Common myeloid progenitor, CD34-positive (primary cell): ENCODE measurements at regions of chr18 and their contacts with region 1.

Region 1: GRCh38 chr18:67104700-67105284 is 411.7 kb downstream of the DSEL start:
- DNase-seq: peak; percentile 47 to 68 (median 62)
- H3K4me3 ChIP-seq: no peak overlapping the region
- H3K27ac ChIP-seq: no peak overlapping the region
- H3K4me1 ChIP-seq: no peaks in the 10 kb centered on the region
- H3K27me3 ChIP-seq: peaks cover 0 to 3% (median 2%) of the 10 kb centered on the region in 5 experiments

Region 2: DNA sequence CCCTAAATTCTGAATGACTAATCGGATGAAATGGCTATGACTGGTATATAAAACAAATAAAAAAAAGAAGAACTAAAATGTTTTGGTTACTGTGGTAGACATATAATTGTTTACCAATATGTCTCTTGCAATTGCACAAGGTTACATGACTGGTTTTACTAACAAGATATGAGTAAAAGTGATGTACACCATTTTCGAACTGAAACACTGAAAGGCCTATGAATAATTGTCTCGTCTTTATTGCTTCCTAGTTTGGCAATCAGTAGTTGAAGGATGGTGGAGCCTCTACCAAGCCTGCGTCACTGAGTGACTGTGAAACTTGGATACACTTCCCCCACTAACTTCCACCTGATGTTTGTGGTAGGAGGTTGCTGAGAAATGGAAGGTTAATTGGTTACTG is 517.4 kb before region 1 on chr18:
- CTCF ChIA-PET with region 1: no interaction called
- POLR2A ChIA-PET with region 1: no interaction called
- DNase-seq: no peak
- H3K4me3 ChIP-seq: no peak overlapping the region
- H3K27ac ChIP-seq: no peak overlapping the region
- H3K4me1 ChIP-seq: no peaks in the 10 kb centered on the region
- H3K27me3 ChIP-seq: no peaks in the 10 kb centered on the region

Region 3: DNA sequence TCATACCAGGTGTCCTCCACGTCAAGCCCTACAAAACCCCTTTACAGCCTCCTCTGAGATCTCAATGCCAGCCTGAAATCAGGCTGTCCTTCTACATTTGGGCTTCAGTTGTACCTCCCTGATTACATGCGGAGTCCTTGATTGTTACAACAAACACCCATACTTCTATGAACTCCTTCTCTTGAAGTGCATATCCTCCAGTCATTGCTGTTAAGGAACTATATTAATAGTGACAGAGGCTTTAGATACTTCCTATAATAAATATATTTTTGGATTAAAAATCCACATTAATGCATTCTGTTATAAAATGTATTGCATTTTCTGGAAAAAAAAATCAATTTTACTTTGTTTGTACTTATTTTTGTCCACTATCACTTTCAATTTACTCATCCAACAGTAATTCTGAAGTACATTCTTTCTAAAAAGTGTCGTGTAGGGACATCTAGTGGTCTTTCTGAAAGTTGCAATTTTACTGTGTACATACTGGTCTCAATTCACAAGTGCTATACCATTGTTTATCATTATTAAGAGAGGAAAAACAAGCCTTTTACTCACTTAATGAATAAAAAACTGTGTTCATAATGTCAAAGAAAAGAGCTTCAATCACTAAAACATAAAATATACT is 95.3 kb after region 1 on chr18:
- CTCF ChIA-PET with region 1: interaction called, 20 read pairs
- POLR2A ChIA-PET with region 1: no interaction called
- DNase-seq: peak; percentile 43 to 76 (median 71)
- H3K4me3 ChIP-seq: no peak overlapping the region
- H3K27ac ChIP-seq: no peak overlapping the region
- H3K4me1 ChIP-seq: no peaks in the 10 kb centered on the region
- H3K27me3 ChIP-seq: peaks cover 0 to 6% (median 0%) of the 10 kb centered on the region in 5 experiments